AG04449 (cell line): ENCODE measurements at regions of chr11 and their contacts with region 1.

Region 1: GRCh38 chr11:120108154-120108865 is 29.6 kb downstream of the TRIM29 start:
- DNase-seq: no peak
- H3K4me3 ChIP-seq: no peak overlapping the region
- CTCF ChIP-seq: peak; percentile 98

Region 2: GRCh38 chr11:119486691-119487259 is 621.5 kb before region 1 on chr11:
- CTCF ChIA-PET with region 1: interaction called, 34 read pairs
- POLR2A ChIA-PET with region 1: no interaction called
- DNase-seq: no peak
- H3K4me3 ChIP-seq: no peak overlapping the region
- CTCF ChIP-seq: no peak

Region 3: DNA sequence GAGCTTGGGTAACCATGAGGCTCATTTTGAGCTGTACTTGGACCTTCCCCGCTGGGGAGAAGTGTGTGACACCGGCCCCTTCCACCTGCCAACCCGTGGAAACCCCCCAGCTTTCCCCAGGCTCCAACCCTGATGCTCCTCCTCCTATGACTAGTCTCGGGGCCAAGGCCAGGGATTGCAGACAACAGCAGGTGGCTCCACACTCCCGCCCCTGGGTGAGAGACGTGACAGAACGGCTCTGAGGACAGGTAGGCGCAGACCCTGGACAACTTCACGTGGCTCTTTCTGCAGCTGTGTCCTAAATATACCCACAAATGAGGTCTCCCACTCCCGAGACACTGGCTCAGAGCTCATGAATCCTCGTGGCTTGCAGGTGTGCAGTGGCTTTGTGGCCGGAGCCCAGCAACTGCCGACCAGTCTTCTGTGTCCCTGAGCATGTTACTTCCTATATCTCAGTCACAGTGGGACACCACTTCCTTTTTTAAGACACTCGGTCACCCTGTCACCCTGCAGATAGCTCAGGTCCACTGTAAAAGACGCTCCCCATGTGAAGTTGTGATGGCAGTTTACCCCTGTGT is 434.5 kb before region 1 on chr11:
- CTCF ChIA-PET with region 1: interaction called, 36 read pairs
- POLR2A ChIA-PET with region 1: no interaction called
- DNase-seq: no peak
- H3K4me3 ChIP-seq: no peak overlapping the region
- CTCF ChIP-seq: no peak

Region 4: GRCh38 chr11:119694334-119694733 is 414.0 kb before region 1 on chr11:
- CTCF ChIA-PET with region 1: interaction called, 10 read pairs
- POLR2A ChIA-PET with region 1: no interaction called
- DNase-seq: no peak
- H3K4me3 ChIP-seq: no peak overlapping the region
- CTCF ChIP-seq: no peak

Region 5: DNA sequence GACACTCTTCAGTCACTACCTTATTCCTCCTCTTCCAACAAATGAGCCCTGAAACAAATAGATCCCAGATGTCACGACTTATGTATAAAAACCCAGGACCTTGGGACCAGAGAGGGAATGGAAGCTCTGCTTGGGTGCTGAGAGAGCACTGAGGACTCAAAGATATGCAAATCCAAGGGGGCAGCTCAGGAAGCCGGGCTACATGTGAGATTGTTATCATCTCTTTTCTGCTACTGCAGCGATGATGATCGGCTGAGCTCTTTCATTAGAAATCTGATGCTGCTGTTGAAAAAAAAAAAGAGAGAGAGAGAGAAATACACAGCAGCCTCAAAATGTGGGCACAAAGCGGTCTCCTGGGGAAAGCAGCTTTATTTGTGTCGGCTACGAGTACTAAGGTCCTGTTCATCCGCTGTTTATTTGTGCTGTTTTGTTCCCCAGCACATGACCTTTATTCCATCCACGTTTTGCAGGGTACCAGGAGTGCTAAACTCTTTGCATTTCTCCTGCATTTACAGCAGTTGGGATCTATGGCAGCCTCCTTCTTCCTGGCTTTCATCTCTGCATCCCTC is 90.6 kb before region 1 on chr11:
- CTCF ChIA-PET with region 1: interaction called, 10 read pairs
- POLR2A ChIA-PET with region 1: no interaction called
- DNase-seq: no peak
- H3K4me3 ChIP-seq: no peak overlapping the region
- CTCF ChIP-seq: no peak

Region 6: GRCh38 chr11:120424185-120424969 is 316.1 kb after region 1 on chr11:
- CTCF ChIA-PET with region 1: no interaction called
- POLR2A ChIA-PET with region 1: no interaction called
- DNase-seq: no peak
- H3K4me3 ChIP-seq: no peak overlapping the region
- CTCF ChIP-seq: no peak